CD8-positive, alpha-beta T cell (primary cell): ENCODE measurements at regions of chr22 and their contacts with region 1.

Region 1: DNA sequence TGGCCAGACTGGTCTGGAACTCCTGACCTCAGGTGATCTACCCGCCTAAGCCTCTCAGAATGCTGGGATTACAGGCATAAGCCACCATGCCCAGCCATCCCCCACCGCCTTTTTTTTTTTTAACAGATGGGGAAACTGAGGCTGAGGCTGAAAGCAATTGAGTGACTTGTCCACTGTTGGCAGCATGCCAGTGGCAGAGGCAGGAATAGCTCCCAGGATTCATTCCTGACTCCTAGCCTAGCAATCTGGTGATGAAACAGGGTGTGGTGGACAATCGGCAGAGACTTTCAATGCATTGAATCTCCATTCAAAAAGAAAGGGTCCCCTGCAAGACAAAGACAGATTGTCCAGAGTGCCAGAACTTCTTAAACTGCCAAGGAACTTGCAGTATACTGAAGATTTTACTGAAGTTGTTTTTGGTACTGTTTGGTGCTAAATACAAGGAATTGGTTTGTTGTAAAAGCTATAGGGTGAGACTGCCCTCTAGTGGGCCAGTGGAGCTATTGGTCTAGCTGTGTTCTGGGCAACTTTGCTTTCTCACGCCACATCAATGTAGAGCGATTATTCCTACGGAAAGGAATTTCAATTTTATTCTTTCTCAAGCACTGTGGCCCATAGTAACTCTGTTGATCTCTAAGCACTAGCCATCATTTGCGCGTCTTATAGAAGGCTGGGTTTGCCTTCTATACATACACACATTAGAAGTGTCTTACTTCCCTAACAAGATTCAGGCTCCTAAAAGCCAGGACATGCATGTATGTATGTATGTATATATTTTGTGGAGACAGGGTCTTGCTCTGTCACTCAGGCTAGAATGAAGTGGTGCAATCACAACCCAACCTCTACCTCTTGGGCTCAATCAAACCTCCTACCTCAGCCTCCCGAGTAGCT is 21.0 kb downstream of the C22orf31 start:
- DNase-seq: peak; percentile 22 to 82 (median 65)
- ATAC-seq: peak; percentile 63
- H3K4me3 ChIP-seq: no peak overlapping the region
- H3K4me3 Mint-ChIP-seq: no peak overlapping the region
- H3K27ac ChIP-seq: no peak overlapping the region
- H3K27ac Mint-ChIP-seq: no peak overlapping the region
- H3K4me1 ChIP-seq: no peaks in the 10 kb centered on the region
- H3K4me1 Mint-ChIP-seq: peaks cover 3% of the 10 kb centered on the region
- H3K27me3 ChIP-seq: peaks cover 0 to 4% of the 10 kb centered on the region in 2 experiments
- H3K27me3 Mint-ChIP-seq: peaks cover 7% of the 10 kb centered on the region
- CTCF ChIP-seq: peak; percentile 97

Region 2: DNA sequence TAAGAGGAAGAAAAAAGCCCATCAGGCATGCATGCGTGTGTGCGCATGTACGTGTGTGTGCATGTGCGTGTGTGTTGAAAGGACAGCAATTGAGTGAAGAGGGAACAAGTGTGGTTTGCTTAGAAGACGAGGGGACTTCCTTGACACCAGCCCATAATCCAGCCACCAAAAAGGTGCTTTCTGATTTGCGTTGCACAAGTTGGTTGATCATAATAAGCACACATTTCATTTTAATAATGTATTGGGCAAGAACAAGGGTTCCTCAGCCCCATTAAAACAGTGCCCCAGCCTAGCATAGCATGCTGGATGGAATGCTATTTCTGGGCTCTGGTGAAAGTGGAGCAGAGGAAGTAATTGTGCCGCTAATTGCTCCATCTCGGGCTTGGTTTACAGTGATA is 1890.1 kb before region 1 on chr22:
- CTCF ChIA-PET with region 1: no interaction called
- POLR2A ChIA-PET with region 1: no interaction called
- intact Hi-C with region 1: no loop called
- DNase-seq: peak in 1 of 9 experiments; percentile 40
- ATAC-seq: no peak
- H3K4me3 ChIP-seq: no peak overlapping the region
- H3K4me3 Mint-ChIP-seq: no peak overlapping the region
- H3K27ac ChIP-seq: no peak overlapping the region
- H3K27ac Mint-ChIP-seq: no peak overlapping the region
- H3K4me1 ChIP-seq: no peaks in the 10 kb centered on the region
- H3K4me1 Mint-ChIP-seq: peaks cover 8% of the 10 kb centered on the region
- H3K27me3 ChIP-seq: no peaks in the 10 kb centered on the region
- H3K27me3 Mint-ChIP-seq: peaks cover 59% of the 10 kb centered on the region
- CTCF ChIP-seq: no peak

Region 3: DNA sequence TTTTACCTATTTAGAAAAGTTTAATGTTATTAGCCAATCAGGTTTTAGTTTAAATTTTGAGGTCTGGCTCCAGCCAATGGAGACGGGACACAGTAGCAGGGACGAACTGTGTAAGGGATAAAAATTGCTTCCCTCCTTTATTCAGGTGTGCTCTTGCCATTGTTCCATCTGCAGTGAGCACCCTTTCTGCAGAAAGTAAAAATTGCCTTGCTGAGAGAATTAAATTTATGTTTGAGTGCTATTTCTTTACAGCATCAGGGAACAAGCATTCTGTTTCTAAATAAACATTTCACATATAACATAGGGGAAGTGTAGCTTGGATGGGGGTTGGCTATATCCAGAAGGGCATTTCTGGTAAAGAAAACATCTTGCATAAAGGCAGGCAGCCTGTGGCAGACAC is 193.6 kb before region 1 on chr22:
- CTCF ChIA-PET with region 1: interaction called, 12 read pairs
- POLR2A ChIA-PET with region 1: no interaction called
- intact Hi-C with region 1: no loop called
- DNase-seq: no peak
- ATAC-seq: no peak
- H3K4me3 ChIP-seq: no peak overlapping the region
- H3K4me3 Mint-ChIP-seq: no peak overlapping the region
- H3K27ac ChIP-seq: no peak overlapping the region
- H3K27ac Mint-ChIP-seq: no peak overlapping the region
- H3K4me1 ChIP-seq: no peaks in the 10 kb centered on the region
- H3K4me1 Mint-ChIP-seq: no peaks in the 10 kb centered on the region
- H3K27me3 ChIP-seq: no peaks in the 10 kb centered on the region
- H3K27me3 Mint-ChIP-seq: no peaks in the 10 kb centered on the region
- CTCF ChIP-seq: no peak

Region 4: GRCh38 chr22:28864878-28865596 is 175.6 kb before region 1 on chr22:
- CTCF ChIA-PET with region 1: interaction called, 12 read pairs
- POLR2A ChIA-PET with region 1: no interaction called
- intact Hi-C with region 1: no loop called
- DNase-seq: no peak
- ATAC-seq: no peak
- H3K4me3 ChIP-seq: no peak overlapping the region
- H3K4me3 Mint-ChIP-seq: no peak overlapping the region
- H3K27ac ChIP-seq: no peak overlapping the region
- H3K27ac Mint-ChIP-seq: no peak overlapping the region
- H3K4me1 ChIP-seq: no peaks in the 10 kb centered on the region
- H3K4me1 Mint-ChIP-seq: no peaks in the 10 kb centered on the region
- H3K27me3 ChIP-seq: no peaks in the 10 kb centered on the region
- H3K27me3 Mint-ChIP-seq: peaks cover 7% of the 10 kb centered on the region
- CTCF ChIP-seq: no peak

Region 5: DNA sequence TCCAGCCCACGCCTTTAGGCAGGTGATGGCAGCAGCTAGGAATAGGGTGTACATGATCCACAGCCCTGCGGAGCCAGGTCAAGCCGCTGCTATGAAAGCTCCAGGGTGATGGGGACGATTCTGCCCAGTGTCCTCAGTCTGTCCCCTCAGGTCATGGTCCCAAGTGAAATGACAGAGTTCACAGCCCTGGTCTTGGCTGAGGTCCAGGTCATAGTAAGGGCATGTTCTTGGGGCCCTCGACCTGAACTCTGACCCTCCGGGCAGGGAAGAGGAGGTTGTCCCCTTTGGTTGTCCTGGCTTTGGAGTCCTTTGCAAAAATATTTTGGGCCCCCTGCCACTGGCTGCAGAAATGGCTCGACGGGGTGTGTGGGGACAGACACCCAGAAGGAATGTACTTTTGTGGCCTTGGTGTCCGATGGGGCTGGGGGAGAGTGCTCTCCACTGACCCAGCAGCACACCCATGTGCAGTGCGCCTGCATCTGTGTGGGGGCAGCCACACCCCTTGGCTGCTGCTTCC is 13.7 kb after region 1 on chr22:
- CTCF ChIA-PET with region 1: interaction called, 10 read pairs
- POLR2A ChIA-PET with region 1: interaction called, 3 read pairs
- intact Hi-C with region 1: no loop called
- DNase-seq: no peak
- ATAC-seq: no peak
- H3K4me3 ChIP-seq: no peak overlapping the region
- H3K4me3 Mint-ChIP-seq: no peak overlapping the region
- H3K27ac ChIP-seq: no peak overlapping the region
- H3K27ac Mint-ChIP-seq: no peak overlapping the region
- H3K4me1 ChIP-seq: no peaks in the 10 kb centered on the region
- H3K4me1 Mint-ChIP-seq: no peaks in the 10 kb centered on the region
- H3K27me3 ChIP-seq: no peaks in the 10 kb centered on the region
- H3K27me3 Mint-ChIP-seq: peaks cover 3% of the 10 kb centered on the region
- CTCF ChIP-seq: no peak

Region 6: GRCh38 chr22:29259253-29259899 is 218.7 kb after region 1 on chr22:
- CTCF ChIA-PET with region 1: no interaction called
- POLR2A ChIA-PET with region 1: no interaction called
- intact Hi-C with region 1: no loop called
- DNase-seq: no peak
- ATAC-seq: no peak
- H3K4me3 ChIP-seq: no peak overlapping the region
- H3K4me3 Mint-ChIP-seq: no peak overlapping the region
- H3K27ac ChIP-seq: no peak overlapping the region
- H3K27ac Mint-ChIP-seq: no peak overlapping the region
- H3K4me1 ChIP-seq: no peaks in the 10 kb centered on the region
- H3K4me1 Mint-ChIP-seq: no peaks in the 10 kb centered on the region
- H3K27me3 ChIP-seq: no peaks in the 10 kb centered on the region
- H3K27me3 Mint-ChIP-seq: no peaks in the 10 kb centered on the region
- CTCF ChIP-seq: no peak